ENCODE measurements at regions of chr16 and their contacts with region 1.

Region 1: DNA sequence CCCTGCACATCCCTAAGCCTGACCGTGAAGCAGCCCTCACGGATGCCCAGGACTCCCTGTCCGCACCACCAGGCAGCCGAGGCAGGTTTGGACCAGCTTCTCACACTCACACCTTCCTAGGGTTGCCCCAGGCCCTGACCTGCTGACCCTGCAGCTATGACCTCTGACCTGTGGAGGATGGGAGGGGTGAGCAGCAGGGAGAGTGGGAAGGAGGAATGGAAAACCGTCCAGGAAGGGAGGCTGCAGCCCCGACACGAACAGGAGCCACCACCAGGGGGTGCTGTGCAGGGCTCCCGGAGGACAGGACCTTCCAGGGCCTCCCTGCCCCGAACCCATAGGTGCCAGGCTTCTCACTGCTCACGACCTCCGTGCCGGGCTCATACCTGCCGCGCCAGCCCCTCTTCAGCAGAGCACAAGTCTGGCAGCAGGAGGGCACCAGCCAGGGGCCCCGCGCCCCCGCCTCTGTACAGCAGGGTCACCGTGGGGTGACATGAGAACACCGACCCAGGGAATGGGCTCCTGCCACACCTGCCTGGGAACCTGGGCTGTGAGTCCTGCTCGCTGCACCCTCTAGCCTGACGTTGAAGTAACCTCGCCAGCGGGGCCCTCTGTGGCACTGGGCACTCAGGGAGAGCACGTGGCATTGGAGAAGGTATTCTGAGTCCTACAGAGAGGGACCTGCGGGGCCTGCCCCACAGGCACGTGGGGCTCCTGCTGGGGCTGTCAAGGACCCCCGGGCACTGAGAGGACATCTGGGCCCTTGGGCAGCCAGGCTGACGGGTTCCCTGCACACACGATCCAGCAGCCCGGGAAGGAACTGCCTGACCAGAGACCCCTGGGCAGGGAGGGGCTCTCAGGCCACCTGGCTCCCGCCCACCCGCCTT is 37.6 kb downstream of the CTU2 start:
- DNase-seq: peak; percentile 87
- H3K4me3 ChIP-seq: no peak overlapping the region
- H3K27ac ChIP-seq: peak overlapping the region in 3 of 4 donors; percentile 14 to 45 (median 40)
- H3K4me1 ChIP-seq: peaks cover 21 to 35% (median 29%) of the 10 kb centered on the region in 4 donors
- H3K27me3 ChIP-seq: no peaks in the 10 kb centered on the region
- CTCF ChIP-seq: peak; percentile 87 to 93 (median 92)
- EP300 ChIP-seq: no peak
- POLR2A ChIP-seq: no peak

Region 2: GRCh38 chr16:88785106-88785924 is 41.4 kb after region 1 on chr16 and contains the start of gene PIEZO1:
- in situ Hi-C with region 1: no loop called
- intact Hi-C with region 1: loop called (anchors 5 kb)
- DNase-seq: peak; percentile 84
- H3K4me3 ChIP-seq: peak within 1 kb of the TSS; percentile 57 to 87 (median 74)
- H3K27ac ChIP-seq: peak within 1 kb of the TSS; percentile 90 to 97 (median 94)
- H3K4me1 ChIP-seq: peaks cover 29 to 43% (median 40%) of the 10 kb centered on the region in 4 donors
- H3K27me3 ChIP-seq: no peaks in the 10 kb centered on the region
- CTCF ChIP-seq: peak; percentile 84 to 98 (median 94)
- EP300 ChIP-seq: no peak
- POLR2A ChIP-seq: peak; percentile 35
- total RNA-seq, gene PIEZO1: 133 to 546 (median 179) TPM

Region 3: DNA sequence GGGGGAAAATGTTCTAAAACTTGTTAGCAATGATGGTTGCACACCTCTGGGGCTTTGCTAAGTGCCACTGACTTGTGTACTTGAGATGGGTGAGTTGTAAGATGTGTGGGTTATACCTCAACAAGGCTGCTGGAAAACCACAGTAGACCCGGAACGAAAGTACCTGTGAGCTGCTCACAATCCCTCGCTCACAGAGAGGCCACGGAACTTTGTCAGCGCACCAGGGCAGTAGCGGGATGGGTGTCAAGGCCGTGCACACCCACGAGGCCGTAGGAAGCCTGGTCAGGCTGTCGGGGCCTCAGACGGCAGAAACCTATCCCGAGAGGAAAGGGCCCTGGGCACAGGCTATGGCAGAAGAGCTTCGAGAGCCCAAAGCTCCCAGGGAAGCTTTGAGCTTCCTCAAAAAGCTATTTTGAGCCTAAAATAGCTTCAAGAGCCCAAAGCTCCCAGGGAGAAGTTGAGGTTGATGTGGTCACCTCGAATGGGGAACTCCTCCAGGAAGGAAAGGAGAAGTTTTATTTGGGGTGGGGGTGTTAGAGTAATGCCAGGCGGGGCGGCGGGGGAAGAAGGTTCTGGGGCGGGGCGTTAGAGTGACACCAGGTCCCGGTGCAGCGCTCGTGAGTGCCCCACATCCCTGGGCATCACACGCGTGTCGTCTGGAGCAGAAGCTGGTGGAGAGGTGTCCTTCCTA is 214.1 kb after region 1 on chr16:
- in situ Hi-C with region 1: no loop called
- intact Hi-C with region 1: no loop called
- DNase-seq: no peak
- H3K4me3 ChIP-seq: no peak overlapping the region
- H3K27ac ChIP-seq: no peak overlapping the region
- H3K4me1 ChIP-seq: no peaks in the 10 kb centered on the region
- H3K27me3 ChIP-seq: peaks cover 5% of the 10 kb centered on the region
- CTCF ChIP-seq: no peak
- EP300 ChIP-seq: no peak
- POLR2A ChIP-seq: no peak

Measured in transverse colon (tissue), 4 donors.